ENCODE measurements at regions of chr6 and their contacts with region 1.

Region 1: DNA sequence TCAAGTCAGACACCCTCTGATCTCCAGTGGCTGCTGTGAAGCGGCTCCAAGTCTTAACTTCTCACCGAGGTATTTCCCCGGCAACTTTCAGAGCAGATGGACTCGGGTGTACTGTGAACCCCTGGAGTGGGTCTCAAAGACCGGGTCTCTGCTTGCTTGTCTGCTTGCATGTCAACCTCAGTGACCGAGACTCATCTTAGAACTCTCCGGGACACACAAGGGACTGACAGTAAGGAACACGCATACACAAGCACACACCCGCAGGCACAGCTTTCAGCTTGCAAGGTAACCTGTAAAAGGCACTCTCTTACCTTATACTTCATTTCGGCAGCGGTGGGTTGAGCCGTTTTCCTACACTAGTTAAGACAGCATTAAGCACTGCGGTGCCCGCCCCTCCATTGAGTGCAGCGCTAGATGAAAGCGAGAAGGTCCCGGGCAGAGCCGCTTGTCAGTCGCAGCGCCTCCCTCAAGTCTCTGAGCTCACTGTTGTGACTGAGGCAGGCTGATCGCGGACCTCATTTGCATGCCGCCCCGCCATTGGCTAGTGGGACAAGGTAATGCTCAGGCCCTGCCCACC is at the start of gene NEDD9:
- DNase-seq: peak; percentile 97
- H3K4me3 ChIP-seq: peak within 1 kb of the TSS; percentile 48 to 64 (median 54)
- H3K27ac ChIP-seq: peak within 1 kb of the TSS; percentile 97
- H3K4me1 ChIP-seq: peaks cover 39% of the 10 kb centered on the region
- H3K27me3 ChIP-seq: no peaks in the 10 kb centered on the region
- CTCF ChIP-seq: no peak
- total RNA-seq, gene NEDD9: 7.8 to 69.7 TPM

Region 2: GRCh38 chr6:11093589-11094410 is 138.5 kb before region 1 on chr6 and contains the start of gene SMIM13:
- CTCF ChIA-PET with region 1: no interaction called
- dilution Hi-C with region 1: no loop called
- in situ Hi-C with region 1: no loop called
- intact Hi-C with region 1: loop called (anchors 5 kb)
- DNase-seq: peak; percentile 95
- H3K4me3 ChIP-seq: peak within 1 kb of the TSS; percentile 81 to 100 (median 89)
- H3K27ac ChIP-seq: peak within 1 kb of the TSS; percentile 87
- H3K4me1 ChIP-seq: peaks cover 12% of the 10 kb centered on the region
- H3K27me3 ChIP-seq: no peaks in the 10 kb centered on the region
- CTCF ChIP-seq: peak; percentile 16 to 42
- total RNA-seq, gene SMIM13: 12.3 to 17.5 TPM

Region 3: DNA sequence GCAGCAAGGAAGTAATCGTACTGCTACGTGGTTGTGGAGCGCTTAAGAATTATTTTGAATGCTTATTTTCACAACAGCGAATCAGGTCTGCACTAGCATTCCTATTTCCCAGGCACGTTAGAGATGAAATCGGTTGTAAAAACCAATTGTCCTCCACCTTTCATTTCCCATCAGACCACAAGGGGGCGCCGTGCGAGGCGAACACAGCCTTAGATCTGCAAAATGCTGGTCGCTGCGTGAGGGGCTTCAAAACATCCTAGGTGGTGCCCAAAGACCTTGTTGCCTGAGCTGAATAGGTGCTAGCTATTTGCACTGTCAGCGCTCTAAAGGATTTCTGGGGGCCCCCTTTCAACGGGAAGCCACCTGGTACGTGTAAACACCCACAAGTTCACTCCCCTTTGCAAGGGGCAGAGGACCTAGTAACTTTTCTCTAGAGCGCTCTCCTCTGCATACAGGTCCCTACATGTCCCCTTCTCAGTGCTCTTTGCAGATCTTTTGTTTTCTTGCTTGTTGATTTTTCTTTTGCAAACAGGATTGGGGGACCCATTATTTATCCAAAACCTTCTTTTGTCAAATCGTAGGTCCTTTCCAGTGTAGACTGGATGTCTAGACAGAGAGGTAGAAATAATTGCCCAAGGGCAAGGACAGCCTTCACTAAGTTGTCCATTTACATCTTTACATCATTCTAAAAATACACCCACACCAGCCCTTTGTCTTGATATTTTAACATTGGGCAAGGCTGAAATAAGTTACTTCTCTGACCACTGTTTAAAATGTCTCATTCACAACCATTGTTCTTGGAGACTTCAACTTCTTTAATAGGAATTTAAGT is 59.6 kb before region 1 on chr6:
- CTCF ChIA-PET with region 1: no interaction called
- dilution Hi-C with region 1: no loop called
- in situ Hi-C with region 1: no loop called
- intact Hi-C with region 1: loop called (anchors 1 kb)
- DNase-seq: peak; percentile 32
- H3K4me3 ChIP-seq: no peak overlapping the region
- H3K27ac ChIP-seq: no peak overlapping the region
- H3K4me1 ChIP-seq: peaks cover 8% of the 10 kb centered on the region
- H3K27me3 ChIP-seq: no peaks in the 10 kb centered on the region
- CTCF ChIP-seq: peak; percentile 72 to 84

Region 4: GRCh38 chr6:11194356-11195218 is 37.7 kb before region 1 on chr6:
- CTCF ChIA-PET with region 1: no interaction called
- dilution Hi-C with region 1: no loop called
- in situ Hi-C with region 1: no loop called
- intact Hi-C with region 1: no loop called
- DNase-seq: no peak
- H3K4me3 ChIP-seq: no peak overlapping the region
- H3K27ac ChIP-seq: no peak overlapping the region
- H3K4me1 ChIP-seq: peaks cover 3% of the 10 kb centered on the region
- H3K27me3 ChIP-seq: no peaks in the 10 kb centered on the region
- CTCF ChIP-seq: no peak

Region 5: DNA sequence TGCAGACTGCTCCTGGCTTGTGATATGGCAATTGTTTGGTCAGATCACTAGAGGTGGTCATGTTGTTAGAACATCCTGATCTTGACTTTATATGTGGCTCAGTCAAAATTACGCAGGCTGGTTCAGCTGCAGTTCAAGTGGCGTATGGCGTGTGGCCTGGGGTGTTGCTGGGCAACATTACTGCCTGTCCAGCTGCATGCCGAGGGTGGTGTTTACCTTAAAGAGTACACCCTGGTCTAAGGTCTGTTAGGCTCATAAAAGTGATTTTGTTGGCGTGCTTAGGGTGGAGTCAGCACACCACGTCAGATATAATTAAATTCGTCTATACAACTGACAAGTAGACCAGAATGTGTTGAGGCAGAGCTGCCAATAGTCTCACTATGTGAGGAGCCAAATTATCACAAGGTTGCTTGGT is 55.8 kb after region 1 on chr6:
- CTCF ChIA-PET with region 1: no interaction called
- dilution Hi-C with region 1: no loop called
- in situ Hi-C with region 1: no loop called
- intact Hi-C with region 1: no loop called
- DNase-seq: no peak
- H3K4me3 ChIP-seq: no peak overlapping the region
- H3K27ac ChIP-seq: no peak overlapping the region
- H3K4me1 ChIP-seq: no peaks in the 10 kb centered on the region
- H3K27me3 ChIP-seq: no peaks in the 10 kb centered on the region
- CTCF ChIP-seq: no peak

Region 6: DNA sequence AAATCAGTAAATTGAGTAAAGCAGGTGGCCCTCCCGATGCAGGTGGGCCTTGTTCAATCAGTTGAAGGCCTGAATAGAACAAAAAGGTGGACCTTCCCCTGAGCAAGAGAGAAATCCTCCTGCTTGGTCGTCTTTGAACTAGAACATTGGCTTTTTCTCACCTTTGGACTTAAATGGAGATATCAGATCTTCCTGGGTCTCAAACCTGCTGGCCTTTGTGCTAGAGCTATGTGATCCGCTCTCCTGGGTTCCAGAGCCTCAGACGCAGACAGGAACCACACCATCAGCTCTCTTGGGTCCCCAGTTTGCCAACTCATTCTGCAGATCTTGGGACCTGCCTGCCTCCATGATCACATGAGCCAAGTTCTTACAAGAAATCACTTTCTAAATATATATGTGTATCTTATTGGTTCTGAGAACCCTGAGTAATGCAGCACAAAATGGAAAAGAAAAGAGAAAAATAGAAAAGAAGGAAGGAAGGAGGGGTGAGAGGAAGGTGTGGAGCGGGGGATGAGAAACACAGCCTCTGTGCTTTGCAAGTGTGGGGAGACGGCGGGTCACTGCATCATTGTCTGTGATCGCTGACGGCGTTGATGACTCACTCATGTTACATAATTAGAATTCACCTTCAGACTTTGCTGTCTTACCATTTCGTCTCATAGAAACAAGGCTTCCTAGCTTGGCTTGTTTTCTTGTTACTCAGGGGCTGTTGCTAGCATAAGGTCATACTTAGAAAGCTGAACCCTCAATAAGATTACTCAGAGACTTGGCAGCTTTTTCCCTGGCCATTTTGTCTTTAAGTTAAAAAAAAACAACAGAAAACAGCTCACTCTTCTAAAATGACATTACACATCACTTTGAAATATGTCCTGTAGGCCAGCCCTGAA is 85.8 kb after region 1 on chr6:
- CTCF ChIA-PET with region 1: no interaction called
- dilution Hi-C with region 1: no loop called
- in situ Hi-C with region 1: loop called in 1 of 2 experiments (anchors 5 kb)
- intact Hi-C with region 1: loop called (anchors 1 kb)
- DNase-seq: peak; percentile 99
- H3K4me3 ChIP-seq: no peak overlapping the region
- H3K27ac ChIP-seq: peak overlapping the region; percentile 96
- H3K4me1 ChIP-seq: peaks cover 51% of the 10 kb centered on the region
- H3K27me3 ChIP-seq: no peaks in the 10 kb centered on the region
- CTCF ChIP-seq: no peak

Region 7: GRCh38 chr6:11496152-11497060 is 264.1 kb after region 1 on chr6:
- CTCF ChIA-PET with region 1: no interaction called
- dilution Hi-C with region 1: no loop called
- in situ Hi-C with region 1: no loop called
- intact Hi-C with region 1: loop called (anchors 1 kb)
- DNase-seq: peak; percentile 60
- H3K4me3 ChIP-seq: no peak overlapping the region
- H3K27ac ChIP-seq: peak overlapping the region; percentile 3
- H3K4me1 ChIP-seq: peaks cover 8% of the 10 kb centered on the region
- H3K27me3 ChIP-seq: no peaks in the 10 kb centered on the region
- CTCF ChIP-seq: peak; percentile 73 to 85